ENCODE measurements at regions of chr3 and their contacts with region 1.

Region 1: DNA sequence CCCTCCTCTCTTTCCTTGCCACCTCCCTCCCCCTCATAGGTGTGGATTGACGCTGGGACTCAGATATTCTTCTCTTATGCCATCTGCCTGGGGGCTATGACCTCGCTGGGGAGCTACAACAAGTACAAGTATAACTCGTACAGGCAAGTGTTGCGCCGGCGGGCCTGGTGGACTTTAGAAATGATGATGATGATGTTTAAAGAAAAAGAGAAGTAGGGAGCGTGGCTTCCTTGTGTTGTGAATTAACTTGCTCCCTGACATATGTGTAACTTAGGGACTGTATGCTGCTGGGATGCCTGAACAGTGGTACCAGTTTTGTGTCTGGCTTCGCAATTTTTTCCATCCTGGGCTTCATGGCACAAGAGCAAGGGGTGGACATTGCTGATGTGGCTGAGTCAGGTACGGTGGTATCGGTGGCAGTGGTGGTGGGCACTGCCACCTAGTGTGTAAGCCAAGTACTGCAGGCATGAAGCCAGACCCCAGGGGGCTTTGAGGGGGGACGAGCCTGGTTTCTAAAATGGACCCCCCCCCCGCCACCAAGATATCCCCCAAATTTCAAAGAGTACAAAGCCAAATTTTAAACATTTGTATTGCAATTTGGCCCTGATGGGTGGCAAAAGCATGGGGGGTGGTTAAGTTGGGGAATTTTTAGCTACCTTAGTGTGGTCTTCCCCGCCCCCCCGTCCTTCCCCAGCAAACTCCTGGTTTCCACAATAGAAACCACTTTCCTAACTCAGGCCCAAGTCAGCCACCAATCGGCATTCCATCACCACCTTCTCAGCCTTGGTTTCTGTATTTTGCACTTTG is 65.6 kb downstream of the SLC6A6 start:
- DNase-seq: no peak
- H3K4me3 ChIP-seq: no peak overlapping the region
- H3K27ac ChIP-seq: no peak overlapping the region
- H3K27me3 ChIP-seq: no peaks in the 10 kb centered on the region
- CTCF ChIP-seq: peak; percentile 87

Region 2: DNA sequence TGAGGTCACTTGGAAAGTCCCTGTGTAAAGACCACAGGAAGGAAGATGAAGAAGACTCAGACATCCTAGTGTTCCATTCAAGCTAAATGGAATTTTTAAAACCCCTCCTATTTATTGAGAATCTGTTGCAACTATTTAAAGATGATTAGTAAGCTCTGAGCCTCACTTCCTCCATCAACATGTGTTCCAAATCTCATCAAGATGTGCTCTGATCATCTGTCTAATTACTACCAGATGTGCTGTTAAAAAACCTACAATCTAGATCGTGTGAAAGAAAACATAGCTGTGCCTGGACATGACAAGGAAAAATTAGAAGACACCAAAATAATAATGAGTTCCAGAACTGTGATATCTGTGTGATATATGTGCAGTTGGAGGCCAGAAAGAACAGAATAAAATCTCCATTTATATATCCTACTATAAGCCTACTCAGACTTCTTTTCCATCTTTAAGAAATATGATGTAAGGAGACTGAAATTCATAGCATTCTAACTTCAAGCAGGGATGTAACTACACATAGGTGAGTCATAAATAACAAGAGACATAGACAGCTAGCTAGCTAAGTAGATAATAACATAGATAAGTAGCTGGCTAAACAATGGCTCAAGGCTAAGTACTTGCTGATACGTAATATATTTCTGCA is 297.4 kb before region 1 on chr3:
- CTCF ChIA-PET with region 1: interaction called, 12 read pairs
- POLR2A ChIA-PET with region 1: no interaction called
- DNase-seq: peak; percentile 29
- H3K4me3 ChIP-seq: no peak overlapping the region
- H3K27ac ChIP-seq: no peak overlapping the region
- H3K27me3 ChIP-seq: no peaks in the 10 kb centered on the region
- CTCF ChIP-seq: no peak

Region 3: DNA sequence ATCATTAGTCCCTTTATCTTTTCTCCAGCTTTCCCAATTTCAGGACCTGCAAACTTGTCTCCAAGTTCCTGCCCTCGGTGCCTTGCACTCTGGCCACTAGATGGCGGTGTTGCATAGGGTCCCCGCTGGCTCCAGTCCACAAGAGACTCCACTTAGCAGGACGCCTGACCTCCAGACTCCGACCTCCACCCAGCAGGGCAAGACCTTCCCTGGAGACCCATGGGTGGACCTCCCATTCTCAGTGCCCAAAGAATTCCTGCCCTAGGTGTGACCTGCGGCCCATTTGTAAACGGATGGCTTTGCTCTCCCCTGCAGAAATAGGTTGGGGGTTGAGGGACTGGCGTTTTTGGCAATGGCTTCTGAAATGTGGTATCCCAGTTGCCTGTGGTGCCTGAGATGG is 206.8 kb before region 1 on chr3:
- CTCF ChIA-PET with region 1: interaction called, 52 read pairs
- POLR2A ChIA-PET with region 1: no interaction called
- DNase-seq: peak; percentile 48
- H3K4me3 ChIP-seq: no peak overlapping the region
- H3K27ac ChIP-seq: no peak overlapping the region
- H3K27me3 ChIP-seq: no peaks in the 10 kb centered on the region
- CTCF ChIP-seq: peak; percentile 99

Region 4: DNA sequence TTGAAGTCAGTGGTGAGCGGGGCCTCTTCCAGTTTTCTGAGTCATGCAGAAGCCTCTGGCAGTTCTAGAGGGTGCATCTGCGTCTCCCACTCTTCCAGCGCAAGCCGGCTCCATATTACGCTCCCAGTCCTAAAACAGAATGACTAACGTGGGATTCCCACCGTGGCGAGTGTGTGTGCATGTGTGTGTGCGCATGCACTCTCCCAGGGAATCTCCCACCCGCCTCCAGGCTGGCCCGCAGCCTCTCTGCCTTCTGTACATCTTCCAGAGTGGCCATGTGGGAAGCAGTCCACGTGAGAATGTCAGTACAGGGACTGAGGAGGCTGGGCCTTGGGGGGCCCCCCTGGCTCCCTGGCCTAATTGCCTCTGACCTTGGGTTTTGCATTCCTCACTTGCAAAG is 201.7 kb before region 1 on chr3:
- CTCF ChIA-PET with region 1: interaction called, 52 read pairs
- POLR2A ChIA-PET with region 1: no interaction called
- DNase-seq: peak; percentile 75
- H3K4me3 ChIP-seq: no peak overlapping the region
- H3K27ac ChIP-seq: no peak overlapping the region
- H3K27me3 ChIP-seq: peaks cover 7% of the 10 kb centered on the region
- CTCF ChIP-seq: no peak

Region 5: DNA sequence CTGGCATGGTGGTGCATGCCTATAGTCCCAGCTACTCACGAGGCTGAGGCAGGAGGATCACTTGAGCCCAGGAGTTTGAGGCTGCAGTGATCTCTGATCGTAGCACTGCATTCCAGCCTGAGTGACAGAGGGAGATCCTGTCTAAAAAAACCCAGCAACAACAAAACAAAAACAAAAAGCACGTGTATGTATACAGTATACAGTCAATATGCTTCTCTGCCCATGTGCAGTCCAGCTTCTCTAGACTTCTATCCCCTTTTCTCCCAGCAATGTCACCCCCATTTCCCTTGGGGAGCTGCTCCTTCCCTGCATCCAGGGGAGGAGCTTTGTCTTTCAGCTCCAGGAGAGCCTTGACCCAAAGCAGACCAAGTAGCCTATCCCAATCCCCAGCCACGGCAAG is 92.1 kb after region 1 on chr3:
- CTCF ChIA-PET with region 1: interaction called, 11 read pairs
- POLR2A ChIA-PET with region 1: no interaction called
- DNase-seq: no peak
- H3K4me3 ChIP-seq: no peak overlapping the region
- H3K27ac ChIP-seq: no peak overlapping the region
- H3K27me3 ChIP-seq: peaks cover 38% of the 10 kb centered on the region
- CTCF ChIP-seq: no peak